Right ventricle myocardium superior (tissue), 1 donor: ENCODE measurements at regions of chr16 and their contacts with region 1.

Region 1: GRCh38 chr16:58487566-58488351 is 12.2 kb upstream of the NDRG4 start:
- DNase-seq: peak; percentile 92
- ATAC-seq: peak; percentile 84

Region 2: DNA sequence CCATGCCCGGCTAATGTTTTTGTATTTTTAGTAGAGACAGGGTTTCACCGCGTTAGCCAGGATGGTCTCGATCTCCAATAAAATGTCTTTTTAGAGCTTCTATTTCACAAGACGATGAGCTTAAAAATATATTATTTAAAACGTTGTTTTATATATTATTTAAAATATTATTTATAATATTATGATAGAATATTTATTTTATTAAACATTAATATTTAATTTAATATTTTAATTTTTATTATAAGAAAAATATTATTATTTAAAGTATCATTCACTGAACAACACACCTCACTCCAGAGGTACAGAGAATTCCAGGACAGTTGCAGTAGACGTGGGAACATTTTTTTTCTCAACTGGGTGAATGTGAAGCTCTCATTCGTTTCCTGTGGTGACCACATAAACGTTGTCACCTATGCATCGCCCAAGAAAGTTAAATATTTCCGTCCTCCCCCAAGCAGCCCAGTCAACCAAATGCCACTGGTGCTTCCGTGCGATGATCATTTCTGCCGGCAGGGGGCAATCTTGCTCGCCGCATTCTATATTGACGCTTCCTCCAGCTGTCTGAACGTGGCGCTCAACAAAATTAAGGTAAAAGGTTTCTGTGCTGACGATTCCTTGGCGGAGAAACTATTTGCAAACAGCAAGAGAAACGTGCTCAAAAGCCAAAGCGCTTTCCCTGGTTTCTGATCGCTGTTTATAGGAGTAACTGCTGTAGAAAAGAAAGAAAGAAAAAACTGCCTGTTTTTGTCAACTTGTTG is 151.2 kb before region 1 on chr16:
- intact Hi-C with region 1: loop called (anchors 2 kb)
- DNase-seq: peak; percentile 90
- ATAC-seq: peak; percentile 82

Region 3: DNA sequence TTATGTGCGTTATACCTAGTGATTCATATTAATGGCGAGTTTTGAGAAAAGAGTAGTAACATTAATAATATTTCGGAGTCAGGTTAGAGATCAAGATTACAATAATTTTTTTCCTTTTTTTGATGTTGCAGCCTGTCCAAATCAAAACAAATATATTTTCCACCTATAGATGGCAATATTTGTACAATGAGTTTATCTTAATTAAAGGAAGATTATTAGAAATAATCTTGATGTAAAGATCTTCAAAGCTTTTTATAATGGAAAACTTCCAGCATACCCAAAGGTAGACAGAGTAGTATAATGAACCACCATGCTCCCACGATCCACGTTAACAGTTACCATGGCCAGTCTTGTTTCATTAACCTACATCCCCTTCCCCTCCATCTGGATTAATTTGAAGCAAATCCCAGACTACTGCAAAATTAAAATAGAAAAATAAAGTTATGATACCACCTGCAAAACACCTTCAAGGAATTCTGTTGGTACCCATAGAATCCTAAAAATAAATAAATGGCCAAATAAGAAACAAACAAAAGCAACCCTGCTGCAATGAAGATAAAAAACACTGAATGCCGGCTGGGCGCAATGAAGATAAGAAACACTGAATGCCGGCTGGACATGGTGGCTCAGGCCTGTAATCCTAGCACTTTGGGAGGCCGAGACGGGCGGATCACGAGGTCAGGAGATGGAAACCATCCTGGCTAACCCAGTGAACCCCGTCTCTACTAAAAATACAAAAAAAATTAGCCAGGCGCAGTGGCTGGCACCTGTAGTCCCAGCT is 142.0 kb before region 1 on chr16:
- intact Hi-C with region 1: loop called (anchors 2 kb)
- DNase-seq: no peak
- ATAC-seq: no peak

Region 4: DNA sequence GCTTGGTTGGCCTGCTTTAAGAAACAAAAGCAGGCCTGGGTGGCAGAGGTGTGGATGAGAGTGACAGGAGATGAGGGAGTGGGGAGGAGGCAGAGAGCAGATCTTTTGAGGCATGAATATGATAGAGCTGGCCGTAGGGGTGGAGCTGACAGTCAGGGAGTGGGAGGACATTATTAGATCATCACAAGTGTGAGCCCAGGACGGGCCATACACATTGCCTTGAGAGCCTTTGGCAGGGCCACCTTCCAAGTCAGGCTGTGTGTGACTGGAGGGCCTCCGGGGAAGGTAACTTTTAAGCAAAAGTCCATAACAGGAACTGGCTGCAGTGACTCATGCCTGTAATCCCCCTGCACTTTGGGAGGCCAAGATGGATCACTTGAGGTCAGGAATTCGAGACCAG is 69.2 kb before region 1 on chr16:
- intact Hi-C with region 1: loop called (anchors 10 kb)
- DNase-seq: peak; percentile 82
- ATAC-seq: peak; percentile 66

Region 5: GRCh38 chr16:58814348-58814801 is 326.6 kb after region 1 on chr16:
- intact Hi-C with region 1: no loop called
- DNase-seq: peak; percentile 53
- ATAC-seq: peak; percentile 92